Heart left ventricle (tissue), 16 donors: ENCODE measurements at regions of chr6 and their contacts with region 1.

Region 1: DNA sequence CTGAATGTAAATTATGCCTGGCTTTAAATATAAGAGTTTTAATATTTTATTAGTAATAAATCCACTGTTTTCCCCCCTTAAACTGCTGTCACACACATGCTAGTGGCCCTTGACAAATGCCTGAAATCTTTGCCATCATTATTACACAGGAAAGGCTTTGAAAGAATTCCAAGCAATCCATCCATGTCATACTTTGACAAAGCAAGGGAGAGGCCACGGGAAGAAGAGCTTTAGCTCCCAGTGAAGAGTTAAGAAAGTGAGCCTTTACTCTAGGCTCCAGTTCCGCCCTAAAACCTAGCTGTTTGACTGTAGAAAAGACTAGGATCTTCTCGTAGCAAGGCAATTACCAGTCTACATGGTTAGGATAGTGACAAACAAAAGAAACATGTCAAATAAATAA is 147.9 kb downstream of the GMDS start:
- DNase-seq: no peak
- ATAC-seq: no peak
- H3K4me3 ChIP-seq: no peak overlapping the region
- H3K27ac ChIP-seq: no peak overlapping the region
- H3K4me1 ChIP-seq: no peaks in the 10 kb centered on the region
- H3K27me3 ChIP-seq: no peaks in the 10 kb centered on the region
- CTCF ChIP-seq: no peak
- POLR2A ChIP-seq: no peak

Region 2: GRCh38 chr6:1840491-1841121 is 256.9 kb before region 1 on chr6:
- intact Hi-C with region 1: loop called in 1 of 10 experiments (anchors 10 kb)
- DNase-seq: no peak
- ATAC-seq: no peak
- H3K4me3 ChIP-seq: no peak overlapping the region
- H3K27ac ChIP-seq: peak overlapping the region in 1 of 12 donors; percentile 18
- H3K4me1 ChIP-seq: peaks cover 0 to 14% (median 0%) of the 10 kb centered on the region in 12 donors
- H3K27me3 ChIP-seq: no peaks in the 10 kb centered on the region
- CTCF ChIP-seq: no peak
- POLR2A ChIP-seq: no peak

Region 3: GRCh38 chr6:1923449-1923848 is 174.0 kb before region 1 on chr6:
- intact Hi-C with region 1: no loop called
- DNase-seq: no peak
- ATAC-seq: no peak
- H3K4me3 ChIP-seq: no peak overlapping the region
- H3K27ac ChIP-seq: no peak overlapping the region
- H3K4me1 ChIP-seq: no peaks in the 10 kb centered on the region
- H3K27me3 ChIP-seq: no peaks in the 10 kb centered on the region
- CTCF ChIP-seq: no peak
- POLR2A ChIP-seq: no peak

Region 4: DNA sequence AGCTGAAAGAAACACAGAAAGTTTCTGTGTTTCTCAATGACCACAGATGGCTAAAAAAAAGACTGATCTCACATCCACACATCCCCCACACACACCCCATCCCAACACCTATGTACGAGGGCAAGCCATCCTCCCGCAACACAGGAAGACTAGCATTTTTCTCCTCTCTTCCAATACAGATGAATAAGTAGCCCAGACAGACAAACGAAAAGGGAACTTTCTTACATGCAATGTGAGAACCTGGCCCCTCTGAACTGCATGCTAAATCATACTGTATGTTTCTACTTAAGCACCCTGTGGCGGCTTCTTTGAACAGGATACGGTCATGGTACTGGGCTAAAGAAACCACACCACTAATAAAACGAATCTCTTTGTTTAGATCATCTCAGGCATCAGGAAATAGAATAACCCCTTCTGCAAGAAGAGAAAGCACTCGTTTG is 31.7 kb after region 1 on chr6:
- intact Hi-C with region 1: no loop called
- DNase-seq: no peak
- ATAC-seq: no peak
- H3K4me3 ChIP-seq: no peak overlapping the region
- H3K27ac ChIP-seq: no peak overlapping the region
- H3K4me1 ChIP-seq: peaks cover 0 to 39% (median 13%) of the 10 kb centered on the region in 12 donors
- H3K27me3 ChIP-seq: no peaks in the 10 kb centered on the region
- CTCF ChIP-seq: no peak
- POLR2A ChIP-seq: no peak

Region 5: DNA sequence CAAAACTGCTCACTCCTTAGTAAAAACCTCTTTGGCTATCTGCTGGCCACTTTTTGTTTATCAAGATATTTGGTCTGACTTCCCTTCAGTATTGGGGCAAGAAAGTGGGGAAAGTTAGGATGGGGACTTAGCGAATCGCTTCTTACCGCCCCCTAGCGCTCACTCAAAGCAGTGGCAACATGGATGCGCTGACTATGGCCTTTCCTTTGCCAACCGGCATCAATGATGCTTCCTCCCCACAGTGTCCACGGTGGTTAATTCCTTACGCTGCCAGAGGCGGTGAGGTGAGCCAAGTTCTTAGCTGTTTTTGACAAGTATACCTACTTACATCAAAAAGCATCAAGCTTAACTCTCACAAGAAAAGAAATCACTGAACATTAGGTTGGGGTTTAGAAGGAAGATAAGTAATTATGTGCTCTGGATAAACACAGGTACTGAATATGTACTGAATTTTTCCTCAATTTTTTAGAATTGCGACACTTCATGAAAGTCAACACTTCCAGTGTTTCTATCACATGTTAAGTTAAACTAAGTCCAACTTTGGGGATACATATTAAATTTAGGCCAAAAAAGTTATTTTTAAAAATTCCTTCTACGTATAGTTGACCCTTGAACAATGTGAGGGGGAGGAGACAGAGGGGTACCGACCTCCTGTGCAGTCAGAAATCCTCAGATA is 61.3 kb after region 1 on chr6:
- intact Hi-C with region 1: no loop called
- DNase-seq: no peak
- ATAC-seq: no peak
- H3K4me3 ChIP-seq: no peak overlapping the region
- H3K27ac ChIP-seq: no peak overlapping the region
- H3K4me1 ChIP-seq: peaks cover 0 to 29% (median 10%) of the 10 kb centered on the region in 12 donors
- H3K27me3 ChIP-seq: no peaks in the 10 kb centered on the region
- CTCF ChIP-seq: peak in 8 of 12 donors; percentile 13 to 43 (median 30)
- POLR2A ChIP-seq: no peak